ENCODE measurements at regions of chr18 and their contacts with region 1.

Region 1: DNA sequence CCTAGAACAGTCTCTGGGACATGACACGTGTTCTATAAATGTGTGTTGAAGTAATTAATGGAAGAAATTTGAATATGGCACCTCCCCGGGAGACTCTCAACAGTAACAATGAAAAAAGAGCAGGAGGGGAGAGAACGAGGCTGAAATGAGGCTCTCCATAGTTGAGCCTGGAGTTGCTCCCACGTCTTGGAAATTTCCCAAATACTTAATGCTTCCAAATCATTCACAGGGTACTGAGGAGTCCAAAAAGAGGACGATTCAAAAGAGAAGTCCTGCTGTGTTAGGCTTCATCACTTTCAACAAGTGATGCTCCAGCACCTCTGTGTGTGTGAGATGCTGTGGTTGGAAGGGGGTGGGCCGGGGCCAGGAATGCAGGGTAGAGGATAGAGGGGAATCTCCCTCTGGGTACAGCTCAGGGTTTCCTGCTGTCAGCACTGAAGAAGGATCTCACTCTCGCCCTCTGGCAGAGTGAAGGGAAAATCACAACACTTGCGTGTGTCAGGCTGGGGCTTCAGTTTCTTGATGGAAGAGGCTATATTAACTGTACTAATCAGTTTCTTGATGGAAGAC is 18.1 kb upstream of the ZNF407 start:
- DNase-seq: no peak
- H3K4me3 ChIP-seq: no peak overlapping the region
- H3K27ac ChIP-seq: no peak overlapping the region
- H3K4me1 ChIP-seq: no peaks in the 10 kb centered on the region
- H3K27me3 ChIP-seq: no peaks in the 10 kb centered on the region
- CTCF ChIP-seq: no peak
- POLR2A ChIP-seq: no peak

Region 2: GRCh38 chr18:73199151-73199550 is 1380.4 kb before region 1 on chr18:
- intact Hi-C with region 1: no loop called
- DNase-seq: no peak
- H3K4me3 ChIP-seq: no peak overlapping the region
- H3K27ac ChIP-seq: no peak overlapping the region
- H3K4me1 ChIP-seq: no peaks in the 10 kb centered on the region
- H3K27me3 ChIP-seq: no peaks in the 10 kb centered on the region
- CTCF ChIP-seq: no peak
- POLR2A ChIP-seq: no peak

Region 3: GRCh38 chr18:74562131-74562730 is 17.4 kb before region 1 on chr18:
- intact Hi-C with region 1: no loop called
- DNase-seq: no peak
- H3K4me3 ChIP-seq: no peak overlapping the region
- H3K27ac ChIP-seq: no peak overlapping the region
- H3K4me1 ChIP-seq: no peaks in the 10 kb centered on the region
- H3K27me3 ChIP-seq: no peaks in the 10 kb centered on the region
- CTCF ChIP-seq: no peak
- POLR2A ChIP-seq: no peak

Region 4: GRCh38 chr18:74778191-74778847 is 198.7 kb after region 1 on chr18:
- intact Hi-C with region 1: no loop called
- DNase-seq: no peak
- H3K4me3 ChIP-seq: no peak overlapping the region
- H3K27ac ChIP-seq: no peak overlapping the region
- H3K4me1 ChIP-seq: no peaks in the 10 kb centered on the region
- H3K27me3 ChIP-seq: no peaks in the 10 kb centered on the region
- CTCF ChIP-seq: no peak
- POLR2A ChIP-seq: no peak

Region 5: DNA sequence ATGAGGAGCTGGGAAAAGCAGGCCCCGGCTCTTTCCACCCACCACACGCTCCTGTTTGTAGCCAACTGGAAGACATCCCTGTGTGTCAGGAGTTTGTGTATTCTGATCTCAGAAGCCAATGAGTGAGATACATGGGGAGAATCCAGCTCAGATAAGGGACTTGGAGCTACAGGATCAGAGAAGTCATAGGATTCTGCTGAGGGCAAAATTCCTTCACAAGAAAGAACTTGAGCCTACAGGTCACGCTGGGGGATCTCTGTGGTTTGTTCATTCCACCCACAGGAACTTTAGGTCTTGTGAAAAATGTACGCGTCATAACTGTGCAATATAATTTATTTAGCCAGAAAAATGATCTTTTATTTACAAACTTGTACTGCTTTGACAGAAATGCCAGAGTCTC is 928.1 kb after region 1 on chr18:
- intact Hi-C with region 1: loop called (anchors 10 kb)
- DNase-seq: no peak
- H3K4me3 ChIP-seq: no peak overlapping the region
- H3K27ac ChIP-seq: no peak overlapping the region
- H3K4me1 ChIP-seq: no peaks in the 10 kb centered on the region
- H3K27me3 ChIP-seq: no peaks in the 10 kb centered on the region
- CTCF ChIP-seq: no peak
- POLR2A ChIP-seq: no peak

Region 6: GRCh38 chr18:76174451-76174850 is 1594.9 kb after region 1 on chr18:
- intact Hi-C with region 1: no loop called
- DNase-seq: no peak
- H3K4me3 ChIP-seq: no peak overlapping the region
- H3K27ac ChIP-seq: no peak overlapping the region
- H3K4me1 ChIP-seq: no peaks in the 10 kb centered on the region
- H3K27me3 ChIP-seq: no peaks in the 10 kb centered on the region
- CTCF ChIP-seq: no peak
- POLR2A ChIP-seq: no peak

Measured in breast epithelium (tissue), 4 donors.